ENCODE measurements at regions of chr22 and their contacts with region 1.

Region 1: GRCh38 chr22:43826142-43827002 is 14.3 kb upstream of the EFCAB6 start:
- DNase-seq: no peak
- ATAC-seq: no peak
- H3K4me3 Mint-ChIP-seq: no peak overlapping the region
- H3K27ac Mint-ChIP-seq: 0 out of 2 replicates have a peak overlapping the region, but pooled peaks have one; percentile 43
- H3K4me1 Mint-ChIP-seq: peaks cover 53% of the 10 kb centered on the region
- H3K27me3 Mint-ChIP-seq: no peaks in the 10 kb centered on the region
- CTCF ChIP-seq: no peak

Region 2: GRCh38 chr22:43848366-43849171 is 22.2 kb after region 1 on chr22:
- CTCF ChIA-PET with region 1: interaction called, 17 read pairs
- POLR2A ChIA-PET with region 1: no interaction called
- DNase-seq: peak; percentile 42
- ATAC-seq: peak; percentile 50; the same call in 1 of the 2 replicates
- H3K4me3 Mint-ChIP-seq: no peak overlapping the region
- H3K27ac Mint-ChIP-seq: peak overlapping the region; percentile 72
- H3K4me1 Mint-ChIP-seq: peaks cover 32% of the 10 kb centered on the region
- H3K27me3 Mint-ChIP-seq: no peaks in the 10 kb centered on the region
- CTCF ChIP-seq: no peak

Measured in WTC11 (cell line).